PC-3 (cell line): ENCODE measurements at regions of chr16 and their contacts with region 1.

Region 1: DNA sequence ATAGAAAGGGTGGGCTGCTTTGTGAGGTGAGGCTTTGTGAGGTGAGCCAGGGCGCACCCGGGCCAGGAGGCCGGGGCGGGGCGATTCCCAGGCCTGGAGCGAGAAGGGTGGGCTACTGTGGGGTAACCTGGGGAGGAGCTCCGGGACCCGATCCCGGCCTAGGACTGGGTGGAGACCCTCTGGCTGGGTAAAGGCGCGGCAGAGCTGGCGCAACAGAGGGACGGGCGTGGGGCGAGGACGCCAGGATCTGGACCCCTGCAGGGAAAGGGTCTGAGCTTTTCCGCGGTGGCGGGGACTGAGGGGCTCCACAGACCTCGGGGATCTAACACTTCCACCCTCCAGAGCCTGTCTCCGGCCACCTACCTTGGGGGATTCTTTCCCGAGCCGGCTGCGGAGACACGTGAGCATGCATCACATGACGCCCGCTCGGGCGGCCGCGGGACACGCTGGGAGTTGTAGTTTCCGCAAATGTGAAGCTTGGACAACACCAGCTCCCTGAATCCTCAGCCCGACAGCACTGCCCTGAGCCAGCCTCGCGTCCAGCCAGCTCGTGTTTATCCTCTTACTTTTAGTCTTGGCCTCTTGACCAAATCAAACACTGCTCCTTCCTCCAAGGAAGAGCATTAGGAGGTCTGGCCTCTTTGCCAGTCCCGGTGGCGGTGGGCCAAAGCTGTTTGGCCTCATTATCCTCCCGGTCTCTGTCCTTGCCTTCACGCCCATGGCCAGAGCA is at the start of gene SLC38A7:
- DNase-seq: peak; percentile 73
- ATAC-seq: peak; percentile 99
- H3K4me3 ChIP-seq: peak within 1 kb of the TSS; percentile 78
- H3K27ac ChIP-seq: 0 out of 2 replicates have a peak within 1 kb of the TSS, but pooled peaks have one; percentile 2
- H3K4me1 ChIP-seq: peaks cover 14% of the 10 kb centered on the region
- H3K27me3 ChIP-seq: no peaks in the 10 kb centered on the region
- CTCF ChIP-seq: no peak
- total RNA-seq, gene SLC38A7: 4.0 and 7.3 TPM in 2 replicates

Region 2: DNA sequence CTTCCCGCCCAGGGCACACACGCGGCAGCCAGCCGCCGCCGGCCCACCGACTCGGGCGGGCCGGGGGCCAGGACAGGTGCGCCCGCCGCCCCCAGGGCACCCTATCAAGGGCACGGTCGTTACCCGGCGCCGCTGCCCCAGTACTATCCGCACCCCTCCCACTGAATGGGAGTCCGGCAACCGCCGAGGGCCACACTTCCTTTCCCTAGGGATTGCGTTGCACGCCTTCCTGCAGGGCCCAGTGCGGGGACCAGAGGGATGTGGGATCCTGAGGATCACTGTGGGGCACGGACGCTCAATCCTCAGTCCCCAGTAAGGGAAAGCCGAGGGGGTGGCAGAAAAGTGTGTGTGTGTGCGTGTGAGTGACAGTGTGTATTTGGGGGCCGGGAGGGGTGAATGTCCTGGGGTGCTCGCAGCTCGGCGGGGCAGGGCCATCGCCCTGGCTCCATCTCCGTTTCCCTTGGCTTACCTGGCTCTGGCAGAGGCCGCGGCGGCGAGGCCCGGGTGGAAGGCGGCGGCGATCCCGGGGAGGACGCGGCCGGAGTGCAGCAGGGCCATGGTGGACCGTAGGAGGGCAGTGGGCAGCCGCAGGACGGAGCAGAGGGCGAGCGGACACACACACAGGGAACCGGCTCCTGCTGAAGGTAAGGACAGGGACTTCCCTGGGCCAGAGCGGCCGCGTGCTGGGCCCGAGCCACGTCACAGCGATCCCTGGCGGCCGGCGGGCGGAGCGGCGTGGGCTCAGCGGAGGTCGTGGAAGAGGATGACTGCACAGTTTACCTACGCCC is 49.3 kb after region 1 on chr16 and contains the start of gene GOT2:
- CTCF ChIA-PET with region 1: no interaction called
- POLR2A ChIA-PET with region 1: no interaction called
- intact Hi-C with region 1: loop called (anchors 10 kb)
- DNase-seq: peak; percentile 82
- ATAC-seq: peak; percentile 95
- H3K4me3 ChIP-seq: peak within 1 kb of the TSS; percentile 85
- H3K27ac ChIP-seq: peak within 1 kb of the TSS; percentile 58
- H3K4me1 ChIP-seq: peaks cover 10% of the 10 kb centered on the region
- H3K27me3 ChIP-seq: no peaks in the 10 kb centered on the region
- CTCF ChIP-seq: peak; percentile 80
- total RNA-seq, gene GOT2: 83.6 and 90.6 TPM in 2 replicates